Transverse colon (tissue), 4 donors: ENCODE measurements at regions of chr7 and their contacts with region 1.

Region 1: GRCh38 chr7:831596-832166 is 595 bp upstream of the SUN1 start:
- DNase-seq: no peak
- H3K4me3 ChIP-seq: peak overlapping the region in 1 of 4 donors; percentile 9
- H3K27ac ChIP-seq: peak overlapping the region; percentile 76 to 87 (median 83)
- H3K4me1 ChIP-seq: peaks cover 22 to 61% (median 47%) of the 10 kb centered on the region in 4 donors
- H3K27me3 ChIP-seq: no peaks in the 10 kb centered on the region
- CTCF ChIP-seq: no peak
- EP300 ChIP-seq: no peak
- POLR2A ChIP-seq: no peak

Region 2: DNA sequence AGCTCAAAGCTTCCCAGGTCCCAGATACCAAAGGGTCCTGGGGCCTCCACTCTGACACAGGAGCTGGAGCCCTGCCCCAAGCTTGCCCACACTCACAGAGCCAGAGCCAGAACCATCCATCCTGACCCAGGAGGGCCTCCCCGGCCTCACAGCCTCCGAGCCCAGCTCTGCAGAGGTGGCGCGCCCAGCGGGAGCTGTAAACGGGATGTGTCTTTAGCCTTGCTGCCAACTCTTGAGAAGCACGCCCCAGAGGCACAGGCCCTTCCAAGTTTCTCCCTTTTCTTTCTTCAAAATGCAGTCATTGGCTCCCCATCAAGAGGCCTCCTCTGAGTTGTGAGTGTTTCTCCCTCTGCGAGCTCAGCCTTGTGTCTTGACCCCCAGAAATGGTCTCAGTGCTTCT is 387.1 kb before region 1 on chr7:
- in situ Hi-C with region 1: no loop called
- intact Hi-C with region 1: no loop called
- DNase-seq: no peak
- H3K4me3 ChIP-seq: no peak overlapping the region
- H3K27ac ChIP-seq: no peak overlapping the region
- H3K4me1 ChIP-seq: no peaks in the 10 kb centered on the region
- H3K27me3 ChIP-seq: no peaks in the 10 kb centered on the region
- CTCF ChIP-seq: no peak
- EP300 ChIP-seq: no peak
- POLR2A ChIP-seq: no peak

Region 3: GRCh38 chr7:867672-868486 is 36.2 kb after region 1 on chr7:
- in situ Hi-C with region 1: no loop called
- intact Hi-C with region 1: loop called (anchors 5 kb)
- DNase-seq: peak; percentile 88
- H3K4me3 ChIP-seq: no peak overlapping the region
- H3K27ac ChIP-seq: peak overlapping the region; percentile 74 to 91 (median 84)
- H3K4me1 ChIP-seq: peaks cover 13 to 25% (median 16%) of the 10 kb centered on the region in 4 donors
- H3K27me3 ChIP-seq: no peaks in the 10 kb centered on the region
- CTCF ChIP-seq: no peak
- EP300 ChIP-seq: peak; percentile 47
- POLR2A ChIP-seq: no peak